ENCODE measurements at regions of chr5 and their contacts with region 1.

Region 1: DNA sequence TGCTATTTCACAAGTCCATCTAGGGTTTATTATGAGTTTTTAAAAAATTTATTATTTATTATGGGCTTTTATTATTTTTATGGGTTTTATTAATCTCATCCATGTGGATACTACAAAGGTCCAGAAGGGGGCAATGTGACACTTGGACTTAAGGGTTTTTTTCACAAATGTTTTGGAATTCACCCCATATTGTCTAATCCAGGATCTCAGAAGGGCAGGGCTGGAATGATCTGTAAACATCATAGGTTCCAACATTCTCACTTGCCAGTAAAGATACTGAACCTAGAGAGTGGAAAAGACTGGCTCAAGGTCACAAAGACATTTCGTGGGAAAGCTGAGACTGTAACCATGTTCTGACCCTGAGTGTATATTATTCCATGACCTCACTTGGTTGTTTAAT is 35.6 kb downstream of the NIM1K start:
- DNase-seq: peak; percentile 21
- H3K4me3 ChIP-seq: no peak overlapping the region
- H3K27ac ChIP-seq: no peak overlapping the region
- H3K27me3 ChIP-seq: no peaks in the 10 kb centered on the region
- CTCF ChIP-seq: peak; percentile 53

Region 2: DNA sequence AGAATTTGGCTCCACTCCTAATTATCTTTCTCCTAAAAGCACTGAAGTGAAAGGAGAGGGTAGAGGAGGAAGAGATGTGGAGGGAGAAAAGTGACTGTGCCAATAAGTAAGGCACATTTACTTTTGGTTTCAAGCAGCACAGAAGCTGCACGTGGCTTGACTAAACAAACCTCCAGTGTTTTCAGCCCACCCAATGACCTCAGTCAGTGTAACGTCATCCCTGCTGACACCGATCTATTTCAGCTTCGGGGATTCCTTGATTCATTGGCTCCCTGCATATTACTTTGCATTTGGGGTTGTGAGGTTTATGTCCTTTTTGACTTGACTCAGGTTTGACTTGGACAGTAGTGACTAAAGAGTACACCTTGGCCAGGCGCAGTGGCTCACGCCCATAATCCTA is 71.3 kb before region 1 on chr5:
- CTCF ChIA-PET with region 1: no interaction called
- POLR2A ChIA-PET with region 1: no interaction called
- DNase-seq: no peak
- H3K4me3 ChIP-seq: no peak overlapping the region
- H3K27ac ChIP-seq: no peak overlapping the region
- H3K27me3 ChIP-seq: no peaks in the 10 kb centered on the region
- CTCF ChIP-seq: no peak

Region 3: GRCh38 chr5:43203373-43203772 is 24.3 kb before region 1 on chr5:
- CTCF ChIA-PET with region 1: interaction called, 11 read pairs
- POLR2A ChIA-PET with region 1: no interaction called
- DNase-seq: no peak
- H3K4me3 ChIP-seq: no peak overlapping the region
- H3K27ac ChIP-seq: no peak overlapping the region
- H3K27me3 ChIP-seq: no peaks in the 10 kb centered on the region
- CTCF ChIP-seq: no peak